ENCODE measurements at regions of chr14 and their contacts with region 1.

Region 1: GRCh38 chr14:78967110-78967809 is 797.1 kb downstream of the NRXN3 start:
- DNase-seq: no peak
- H3K4me3 Mint-ChIP-seq: no peak overlapping the region
- H3K27ac Mint-ChIP-seq: no peak overlapping the region
- H3K4me1 Mint-ChIP-seq: no peaks in the 10 kb centered on the region
- H3K27me3 Mint-ChIP-seq: peaks cover 48% of the 10 kb centered on the region
- CTCF ChIP-seq: no peak

Region 2: GRCh38 chr14:79661762-79662161 is 694.5 kb after region 1 on chr14:
- CTCF ChIA-PET with region 1: no interaction called
- POLR2A ChIA-PET with region 1: no interaction called
- intact Hi-C with region 1: no loop called
- DNase-seq: no peak
- H3K4me3 Mint-ChIP-seq: no peak overlapping the region
- H3K27ac Mint-ChIP-seq: no peak overlapping the region
- H3K4me1 Mint-ChIP-seq: no peaks in the 10 kb centered on the region
- H3K27me3 Mint-ChIP-seq: no peaks in the 10 kb centered on the region
- CTCF ChIP-seq: no peak

Region 3: GRCh38 chr14:79686196-79686595 is 718.9 kb after region 1 on chr14:
- CTCF ChIA-PET with region 1: no interaction called
- POLR2A ChIA-PET with region 1: no interaction called
- intact Hi-C with region 1: loop called (anchors 5 kb)
- DNase-seq: no peak
- H3K4me3 Mint-ChIP-seq: no peak overlapping the region
- H3K27ac Mint-ChIP-seq: no peak overlapping the region
- H3K4me1 Mint-ChIP-seq: no peaks in the 10 kb centered on the region
- H3K27me3 Mint-ChIP-seq: peaks cover 41% of the 10 kb centered on the region
- CTCF ChIP-seq: no peak